ENCODE measurements at regions of chr15 and their contacts with region 1.

Region 1: GRCh38 chr15:59993950-59994401 is 10.1 kb upstream of the FOXB1 start:
- DNase-seq: no peak
- ATAC-seq: no peak
- H3K4me3 ChIP-seq: no peak overlapping the region
- H3K27ac ChIP-seq: no peak overlapping the region
- H3K4me1 ChIP-seq: no peaks in the 10 kb centered on the region
- H3K27me3 ChIP-seq: peaks cover 2 to 95% (median 39%) of the 10 kb centered on the region in 3 donors
- CTCF ChIP-seq: no peak

Region 2: DNA sequence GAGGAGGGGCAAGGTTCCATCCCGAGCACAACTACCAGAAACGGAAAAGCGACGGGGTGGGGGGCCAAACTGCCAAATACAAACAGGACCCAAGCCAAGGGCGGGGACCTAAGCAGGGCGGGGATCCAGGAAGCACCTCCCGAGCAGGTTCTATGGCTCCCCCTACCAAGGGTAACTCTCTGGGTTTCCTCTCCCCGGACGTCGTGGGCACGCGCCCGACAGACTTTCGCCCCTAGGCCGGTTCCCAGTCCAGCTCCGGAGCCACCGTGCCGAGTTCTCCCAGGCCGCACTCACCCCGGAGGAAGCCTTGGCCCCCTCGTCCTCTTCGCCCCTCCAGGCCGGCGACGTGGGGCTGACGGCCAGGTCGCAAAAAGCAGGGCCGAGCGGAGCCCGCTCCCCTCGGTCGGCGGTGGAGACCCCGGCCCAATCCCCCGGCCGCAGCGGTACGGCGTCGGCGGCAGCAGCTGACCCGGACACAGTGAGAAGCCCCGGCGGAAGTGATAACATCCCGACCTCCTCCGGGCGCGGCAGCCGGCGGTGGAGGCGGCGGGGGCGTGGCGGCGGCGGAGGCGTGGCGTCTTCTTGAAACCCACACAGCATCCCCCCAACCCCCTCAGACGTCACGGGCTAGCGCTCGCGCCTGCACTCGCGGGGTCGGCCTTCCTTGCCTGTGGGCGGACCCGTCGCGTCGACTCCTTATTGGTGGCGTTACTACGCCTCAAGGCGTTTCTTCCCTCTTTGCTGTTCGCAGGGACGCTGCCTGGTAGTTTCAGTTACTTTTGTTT is 304.9 kb before region 1 on chr15 and contains the start of gene BNIP2:
- intact Hi-C with region 1: no loop called
- DNase-seq: peak; percentile 99 to 100
- ATAC-seq: peak; percentile 95 to 98 (median 96)
- H3K4me3 ChIP-seq: peak within 1 kb of the TSS; percentile 75
- H3K27ac ChIP-seq: peak within 1 kb of the TSS; percentile 93
- H3K4me1 ChIP-seq: peaks cover 30% of the 10 kb centered on the region
- H3K27me3 ChIP-seq: no peaks in the 10 kb centered on the region
- CTCF ChIP-seq: no peak
- total RNA-seq, gene BNIP2: 46.7 to 79.0 (median 73.8) TPM

Region 3: DNA sequence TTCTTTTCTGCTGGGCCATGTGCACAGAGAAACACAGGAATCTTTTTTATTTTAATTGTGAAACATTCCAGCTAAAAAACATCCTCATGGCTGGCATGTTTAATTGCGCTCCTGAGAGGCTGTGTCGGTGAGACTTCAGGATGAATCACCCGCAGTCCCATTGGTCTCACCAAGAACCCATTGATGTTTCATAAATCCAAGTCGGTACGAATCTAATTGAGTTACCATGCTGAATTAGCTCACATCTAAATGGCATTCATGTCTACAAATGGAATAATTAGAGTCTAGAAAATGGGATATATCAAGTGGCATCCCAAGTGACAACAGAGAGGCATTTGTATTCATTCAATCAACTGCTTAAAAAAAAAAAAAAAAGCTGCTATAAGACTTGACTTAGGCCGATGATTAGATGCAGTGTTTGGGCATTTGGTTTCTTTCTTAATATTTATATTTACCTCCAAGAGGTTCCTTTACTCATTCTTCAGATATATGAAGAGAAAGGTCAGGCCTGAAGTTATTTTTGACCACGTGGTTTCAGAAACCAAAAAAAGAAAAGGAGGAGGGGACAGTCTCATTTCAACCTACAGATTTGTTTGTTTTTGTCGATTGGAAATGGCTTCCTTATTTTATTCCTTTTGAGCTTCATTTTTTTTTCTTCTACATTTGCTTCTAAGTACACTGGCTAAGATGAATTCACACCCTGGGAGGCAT is 69.0 kb before region 1 on chr15:
- intact Hi-C with region 1: loop called in 1 of 2 experiments (anchors 10 kb)
- DNase-seq: no peak
- ATAC-seq: no peak
- H3K4me3 ChIP-seq: no peak overlapping the region
- H3K27ac ChIP-seq: no peak overlapping the region
- H3K4me1 ChIP-seq: no peaks in the 10 kb centered on the region
- H3K27me3 ChIP-seq: peaks cover 2 to 21% (median 6%) of the 10 kb centered on the region in 3 donors
- CTCF ChIP-seq: no peak

Region 4: DNA sequence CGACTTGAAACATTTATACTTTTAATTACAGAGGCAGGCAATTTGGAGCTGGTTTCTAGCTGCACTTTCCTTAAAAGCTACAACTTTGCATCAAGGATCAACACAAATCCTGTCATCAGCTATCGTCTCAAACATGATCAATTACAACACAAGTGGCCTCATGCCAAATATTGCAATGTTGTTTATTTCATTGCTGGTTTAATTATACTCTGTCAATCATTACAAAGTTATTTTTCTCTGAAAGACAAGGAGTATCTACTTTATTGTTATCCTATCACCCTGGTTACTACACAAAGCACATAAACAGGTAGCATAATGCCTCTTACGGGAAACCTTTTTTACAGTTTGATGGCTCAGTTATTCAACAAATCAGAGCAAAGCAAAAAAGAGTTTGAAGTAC is 47.9 kb before region 1 on chr15:
- intact Hi-C with region 1: no loop called
- DNase-seq: no peak
- ATAC-seq: no peak
- H3K4me3 ChIP-seq: no peak overlapping the region
- H3K27ac ChIP-seq: no peak overlapping the region
- H3K4me1 ChIP-seq: no peaks in the 10 kb centered on the region
- H3K27me3 ChIP-seq: no peaks in the 10 kb centered on the region
- CTCF ChIP-seq: no peak

Measured in psoas muscle (tissue), 8 donors.